ENCODE measurements at regions of chr1 and their contacts with region 1.

Region 1: DNA sequence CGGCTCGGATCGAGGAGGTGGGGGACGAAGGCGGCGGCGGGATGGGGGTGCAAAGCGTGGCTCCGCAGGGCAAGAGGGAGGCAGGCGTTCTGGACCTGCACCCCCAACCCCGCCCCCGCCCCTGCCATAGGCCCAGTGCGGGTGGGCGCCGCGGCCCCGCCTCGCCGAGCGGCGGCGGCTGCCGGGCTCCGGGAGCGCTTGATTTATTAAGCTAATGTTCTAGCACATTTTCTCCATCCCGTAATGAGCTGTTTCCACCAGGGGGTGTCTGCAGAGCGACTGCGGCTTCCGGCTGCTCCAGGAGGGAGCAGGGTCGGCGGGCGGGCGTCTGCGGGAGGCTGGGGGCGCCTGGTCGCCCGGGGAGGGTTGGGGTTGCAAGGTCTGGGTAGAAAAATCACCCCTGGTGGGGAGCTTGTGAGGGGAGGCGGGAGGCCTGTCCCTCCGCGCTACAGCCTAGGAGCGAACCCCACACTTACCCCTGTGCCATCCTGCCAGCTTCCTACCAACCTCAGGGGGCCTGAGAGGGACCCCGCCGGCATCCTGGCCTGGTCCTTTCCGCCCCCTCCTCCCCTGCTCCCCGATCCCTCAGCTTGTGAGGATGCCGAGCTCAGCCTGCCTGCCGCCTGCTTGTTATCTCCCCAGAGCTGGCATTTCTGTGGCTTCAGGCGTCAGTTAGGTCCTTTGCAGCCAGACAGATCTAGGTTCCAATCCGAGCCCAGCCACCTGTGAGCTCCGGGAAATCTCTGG is 48.5 kb upstream of the ACOT11 start:
- DNase-seq: peak; percentile 31
- ATAC-seq: peak; percentile 86

Region 2: GRCh38 chr1:54070171-54070837 is 429.2 kb before region 1 on chr1:
- intact Hi-C with region 1: loop called in 1 of 2 experiments (anchors 5 kb)
- DNase-seq: no peak
- ATAC-seq: peak; percentile 71 to 78

Region 3: GRCh38 chr1:54199765-54200518 is 299.6 kb before region 1 on chr1 and contains the starts of genes CYB5RL and MRPL37:
- intact Hi-C with region 1: loop called in 1 of 2 experiments (anchors 10 kb)
- DNase-seq: peak; percentile 92
- ATAC-seq: peak; percentile 99
- total RNA-seq, gene CYB5RL: 4.4 to 7.2 TPM
- total RNA-seq, gene MRPL37: 54.7 to 64.2 TPM

Region 4: GRCh38 chr1:54335755-54336108 is 163.8 kb before region 1 on chr1:
- intact Hi-C with region 1: no loop called
- DNase-seq: peak; percentile 82
- ATAC-seq: peak; percentile 76 to 89

Region 5: GRCh38 chr1:54361342-54361741 is 138.2 kb before region 1 on chr1:
- intact Hi-C with region 1: no loop called
- DNase-seq: no peak
- ATAC-seq: peak in 1 of 2 donors; percentile 38